ENCODE measurements at regions of chrX and their contacts with region 1.

Region 1: DNA sequence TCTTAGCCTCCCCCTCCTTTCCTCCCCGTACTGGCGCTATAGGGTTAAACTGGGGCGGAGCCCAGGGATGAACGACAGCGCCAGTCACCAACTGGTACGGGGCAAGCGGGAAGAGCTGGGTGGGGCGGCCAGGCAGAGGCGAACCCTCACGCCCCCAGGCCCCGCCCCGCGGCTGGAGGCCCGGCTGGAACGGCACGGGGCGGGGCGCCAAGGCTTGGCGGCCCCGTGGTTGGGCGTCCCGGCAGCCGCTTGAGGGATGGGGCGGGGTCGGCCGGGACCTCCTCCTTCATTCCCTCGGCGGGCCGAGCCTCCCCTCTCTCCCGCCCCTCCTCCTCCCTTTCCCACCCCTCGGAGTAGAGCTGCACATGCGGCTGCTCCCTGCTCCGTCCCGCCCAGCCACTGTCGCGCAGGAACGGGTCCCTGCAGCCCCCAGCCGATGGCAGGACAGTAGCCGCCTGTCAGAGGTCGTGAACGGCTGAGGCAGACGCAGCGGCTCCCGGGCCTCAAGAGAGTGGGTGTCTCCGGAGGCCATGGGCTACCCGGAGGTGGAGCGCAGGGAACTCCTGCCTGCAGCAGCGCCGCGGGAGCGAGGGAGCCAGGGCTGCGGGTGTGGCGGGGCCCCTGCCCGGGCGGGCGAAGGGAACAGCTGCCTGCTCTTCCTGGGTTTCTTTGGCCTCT is at the start of gene EDA:
- DNase-seq: peak; percentile 77
- ATAC-seq: peak; percentile 99
- H3K4me3 Mint-ChIP-seq: peak within 1 kb of the TSS; percentile 72
- H3K27ac Mint-ChIP-seq: no peak within 1 kb of the TSS
- H3K4me1 Mint-ChIP-seq: peaks cover 2% of the 10 kb centered on the region
- H3K27me3 Mint-ChIP-seq: peaks cover 18% of the 10 kb centered on the region
- total RNA-seq, gene EDA: 0.73 to 1.1 TPM

Region 2: DNA sequence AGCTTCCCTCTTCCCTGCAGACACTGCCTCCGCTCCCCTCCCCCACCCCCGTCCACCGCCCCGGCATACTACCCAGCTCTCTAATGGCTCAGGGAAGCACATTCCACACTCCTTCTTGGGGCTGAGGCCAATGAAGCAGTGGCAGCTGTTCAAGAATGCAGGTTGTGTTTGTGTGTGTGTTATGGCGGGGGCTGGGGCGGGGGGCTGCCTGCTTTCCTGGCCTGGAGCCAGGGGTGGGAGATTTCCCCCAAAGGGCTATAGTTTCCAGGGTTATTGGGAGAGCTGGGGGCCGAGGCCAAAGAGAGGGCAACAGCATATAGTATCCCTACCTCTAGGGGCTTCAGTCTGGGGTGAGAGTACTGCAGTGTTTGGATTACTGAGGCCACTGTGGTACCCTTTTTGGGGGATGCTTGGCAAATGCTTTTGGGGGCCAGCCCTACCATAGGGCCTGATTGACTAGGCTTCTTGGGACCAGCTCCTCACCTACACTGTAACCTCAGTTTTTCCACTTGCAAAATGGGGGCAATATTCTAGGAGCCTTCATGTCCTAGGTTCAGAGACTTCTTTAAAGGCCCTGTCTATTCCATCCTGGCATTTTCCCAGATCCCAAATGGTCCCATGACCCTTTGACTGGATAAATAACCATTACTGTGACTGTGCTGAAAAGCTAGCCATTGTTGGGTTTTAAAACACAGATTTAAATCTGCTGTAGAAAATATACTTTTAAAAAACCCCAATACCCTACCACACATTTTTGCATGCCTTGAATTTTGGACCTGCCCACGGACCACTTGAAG is 637.5 kb before region 1 on chrX:
- CTCF ChIA-PET with region 1: no interaction called
- POLR2A ChIA-PET with region 1: no interaction called
- intact Hi-C with region 1: no loop called
- DNase-seq: no peak
- ATAC-seq: no peak
- H3K4me3 Mint-ChIP-seq: no peak overlapping the region
- H3K27ac Mint-ChIP-seq: no peak overlapping the region
- H3K4me1 Mint-ChIP-seq: no peaks in the 10 kb centered on the region
- H3K27me3 Mint-ChIP-seq: no peaks in the 10 kb centered on the region

Region 3: DNA sequence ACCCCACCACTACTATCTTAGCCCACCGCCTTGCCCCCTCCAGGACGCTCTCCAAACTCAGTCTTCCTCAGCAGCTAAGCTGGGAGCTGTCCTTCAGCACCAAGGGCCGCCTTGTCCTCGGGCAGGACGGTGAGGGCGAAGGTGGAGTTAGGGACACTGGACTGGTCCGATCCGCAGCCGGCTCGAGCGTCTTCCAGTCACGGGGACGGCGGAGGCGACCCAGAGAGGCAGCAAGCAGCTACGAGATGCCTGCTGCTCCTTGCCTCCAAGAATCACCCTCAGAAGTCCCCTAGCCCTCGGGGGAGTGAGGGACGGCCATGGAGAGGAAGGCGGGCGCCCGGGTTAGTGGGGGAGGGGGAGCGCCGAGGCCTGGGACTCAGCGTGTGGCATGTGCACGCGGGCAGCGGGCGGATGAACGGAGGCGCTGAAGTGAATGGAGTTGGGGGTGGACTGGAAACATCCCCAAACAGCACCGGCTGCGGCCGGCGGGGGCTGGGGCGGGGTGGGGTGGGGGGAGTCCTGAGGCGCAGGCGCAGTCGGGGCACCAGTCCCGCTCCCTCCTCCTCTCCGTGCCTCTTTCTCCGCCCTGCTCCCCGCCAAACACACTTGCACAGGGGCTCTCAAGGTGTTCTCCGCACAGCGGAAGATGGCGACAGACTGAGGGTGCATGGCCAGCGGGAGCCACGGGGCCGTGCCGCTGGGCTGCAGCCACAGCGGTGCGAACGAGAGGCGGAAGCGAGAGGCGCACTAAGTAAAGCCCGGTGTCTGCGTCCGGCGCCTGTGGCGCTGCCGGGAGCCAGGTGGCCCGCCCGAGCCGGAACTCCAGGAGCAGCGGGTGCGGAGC is 111.9 kb before region 1 on chrX and contains the start of gene NALF2:
- CTCF ChIA-PET with region 1: no interaction called
- POLR2A ChIA-PET with region 1: no interaction called
- intact Hi-C with region 1: loop called in 1 of 2 experiments (anchors 5 kb)
- DNase-seq: peak; percentile 63
- ATAC-seq: peak; percentile 79
- H3K4me3 Mint-ChIP-seq: peak within 1 kb of the TSS; percentile 63
- H3K27ac Mint-ChIP-seq: no peak within 1 kb of the TSS
- H3K4me1 Mint-ChIP-seq: peaks cover 2% of the 10 kb centered on the region
- H3K27me3 Mint-ChIP-seq: peaks cover 24% of the 10 kb centered on the region
- total RNA-seq, gene NALF2: 0.11 TPM

Region 4: DNA sequence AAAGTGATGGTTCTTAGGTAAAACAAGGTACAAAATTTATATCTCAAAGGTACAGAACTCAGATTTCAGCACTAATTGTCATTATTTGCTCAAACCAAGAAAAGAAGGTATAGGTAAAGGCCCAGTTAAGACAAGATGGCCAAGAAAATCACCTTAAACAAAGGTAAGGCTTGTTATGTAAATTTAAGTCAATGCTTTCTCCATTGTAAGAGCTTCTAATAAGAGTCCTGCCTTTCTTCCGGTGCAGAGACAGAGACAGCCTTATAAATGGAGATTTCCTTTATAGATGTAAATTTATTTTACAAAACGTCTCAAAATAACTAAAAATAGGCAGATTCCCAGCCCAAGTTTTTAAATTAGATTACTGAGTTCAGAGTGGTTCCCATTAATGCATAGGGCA is 89.9 kb after region 1 on chrX:
- CTCF ChIA-PET with region 1: no interaction called
- POLR2A ChIA-PET with region 1: no interaction called
- intact Hi-C with region 1: no loop called
- DNase-seq: no peak
- ATAC-seq: no peak
- H3K4me3 Mint-ChIP-seq: no peak overlapping the region
- H3K27ac Mint-ChIP-seq: no peak overlapping the region
- H3K4me1 Mint-ChIP-seq: no peaks in the 10 kb centered on the region
- H3K27me3 Mint-ChIP-seq: no peaks in the 10 kb centered on the region

Region 5: DNA sequence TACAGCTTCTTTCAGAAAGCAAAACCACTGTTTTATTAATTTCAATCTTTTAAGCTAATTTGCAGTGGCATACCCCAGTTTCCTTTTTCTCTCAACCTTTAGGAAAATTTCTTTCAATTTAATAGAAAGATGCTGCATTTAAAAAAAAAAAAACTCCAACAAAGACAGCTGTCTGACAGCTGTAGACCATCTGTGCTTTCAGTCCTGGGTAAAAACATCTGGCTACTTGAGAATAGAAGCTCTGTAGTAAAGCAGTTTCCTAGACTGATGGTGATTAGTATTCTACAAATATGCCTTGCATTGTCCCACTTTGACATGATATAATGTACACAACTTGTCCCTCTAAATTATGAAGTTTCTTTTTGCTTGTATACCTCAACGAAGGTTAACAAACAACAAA is 197.8 kb after region 1 on chrX:
- CTCF ChIA-PET with region 1: no interaction called
- POLR2A ChIA-PET with region 1: no interaction called
- intact Hi-C with region 1: no loop called
- DNase-seq: no peak
- ATAC-seq: no peak
- H3K4me3 Mint-ChIP-seq: no peak overlapping the region
- H3K27ac Mint-ChIP-seq: no peak overlapping the region
- H3K4me1 Mint-ChIP-seq: no peaks in the 10 kb centered on the region
- H3K27me3 Mint-ChIP-seq: no peaks in the 10 kb centered on the region

Measured in activated CD4-positive, alpha-beta T cell treated with anti-CD3 and anti-CD28 coated beads for 36 hours (primary cell).